Sciatic nerve (tissue), 2 donors: ENCODE measurements at regions of chr13 and their contacts with region 1.

Region 1: DNA sequence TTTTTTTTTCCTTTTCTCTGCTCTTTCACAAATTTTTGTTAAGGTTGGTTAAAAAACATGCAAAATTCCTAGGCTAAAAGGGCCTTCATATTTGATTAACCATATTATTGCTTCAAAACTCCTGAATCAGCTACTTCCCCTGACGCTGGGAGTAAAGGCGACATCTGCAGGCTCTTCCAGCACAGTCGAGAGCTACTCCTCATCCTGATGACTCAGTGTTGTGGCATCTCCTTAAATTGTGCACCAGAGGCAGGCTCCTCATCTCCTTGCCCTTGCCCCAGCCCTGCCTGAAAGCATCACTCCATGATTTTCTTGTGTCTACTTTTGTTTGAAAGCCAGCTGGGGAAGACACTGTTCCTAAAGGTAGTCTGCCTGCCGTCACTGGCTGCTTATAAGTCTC is 24.5 kb upstream of the SOX1 start:
- DNase-seq: no peak
- ATAC-seq: no peak

Region 2: GRCh38 chr13:111559612-111560403 is 482.7 kb before region 1 on chr13:
- intact Hi-C with region 1: loop called (anchors 10 kb)
- DNase-seq: peak; percentile 51
- ATAC-seq: no peak

Region 3: DNA sequence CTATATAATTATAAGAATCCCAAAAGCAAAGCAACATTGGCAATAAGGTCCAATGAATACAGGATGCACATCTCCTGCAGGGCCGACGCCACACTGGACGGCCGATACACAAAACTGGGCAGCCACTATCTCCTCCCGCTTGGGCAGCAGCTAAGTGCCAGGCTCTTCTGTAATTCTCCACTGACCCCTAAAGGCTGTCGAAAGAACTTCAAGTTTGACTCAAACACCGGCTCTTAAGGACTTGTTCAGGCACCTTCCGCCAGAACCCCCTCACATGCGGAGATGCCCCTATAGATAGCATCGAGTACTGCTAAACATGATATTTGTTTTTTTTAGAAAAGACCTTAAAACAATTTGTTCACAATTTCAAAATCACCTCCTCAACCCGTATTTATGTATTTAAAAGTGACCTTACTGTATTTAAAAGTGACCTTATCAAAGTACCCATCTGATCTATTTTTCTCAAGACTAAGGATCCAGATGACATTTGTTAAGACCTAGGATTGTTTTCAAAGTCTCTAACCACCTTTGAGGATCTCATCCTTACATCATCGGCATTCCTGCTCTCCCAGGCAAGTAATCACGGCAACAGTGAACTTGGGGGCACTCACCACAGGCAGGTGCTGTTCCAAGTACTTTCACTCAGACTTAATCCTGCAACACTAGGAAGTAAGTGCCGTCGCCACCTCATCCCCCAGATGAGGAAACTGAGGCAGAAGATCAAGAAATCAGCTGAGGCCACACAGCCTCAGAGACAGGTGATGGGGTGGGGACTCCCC is 467.7 kb after region 1 on chr13:
- intact Hi-C with region 1: no loop called
- DNase-seq: no peak
- ATAC-seq: peak; percentile 51